ENCODE measurements at regions of chr17 and their contacts with region 1.

Region 1: DNA sequence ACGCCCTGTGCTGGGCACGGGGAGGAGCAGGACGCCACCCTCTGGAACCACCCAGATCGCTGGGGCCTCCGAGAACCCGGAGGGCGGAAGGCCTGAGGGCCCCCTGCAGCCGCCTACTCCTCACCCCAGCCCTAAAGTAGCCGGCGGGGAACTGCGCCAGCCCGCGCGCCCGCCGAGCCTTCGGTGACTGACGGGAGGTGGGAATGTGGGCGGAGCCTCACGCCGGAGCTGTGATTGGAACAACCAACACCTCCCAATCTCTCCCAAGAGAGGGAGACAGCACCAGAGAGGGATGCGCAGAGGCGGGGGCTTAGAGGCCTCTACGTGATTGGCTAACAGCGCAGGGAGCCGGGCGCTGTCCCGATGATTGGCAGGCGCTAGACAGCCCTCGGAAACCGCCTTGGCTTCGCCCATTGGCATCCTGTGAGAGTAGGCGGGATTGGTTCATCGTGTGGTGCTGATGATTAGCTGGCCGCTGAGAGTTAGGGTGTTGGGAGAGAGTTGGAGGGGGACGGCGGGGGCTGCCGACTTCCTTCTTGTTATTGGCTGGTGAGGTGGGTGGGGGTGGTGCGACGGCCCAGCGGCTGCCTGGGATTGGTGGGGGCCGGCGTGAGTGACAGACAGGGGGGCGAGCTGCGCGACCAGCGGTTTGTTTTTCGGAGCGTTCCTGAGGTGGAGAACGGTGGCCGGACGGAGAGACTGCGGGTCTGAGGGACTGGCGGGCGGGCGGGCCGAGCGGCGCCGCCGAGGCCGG is at the start of gene MAP3K3:
- DNase-seq: peak; percentile 99
- H3K4me3 ChIP-seq: peak within 1 kb of the TSS; percentile 64
- H3K27ac ChIP-seq: no peak within 1 kb of the TSS
- H3K4me1 ChIP-seq: peaks cover 12% of the 10 kb centered on the region; the same call in 1 of the 2 replicates
- H3K27me3 ChIP-seq: no peaks in the 10 kb centered on the region
- CTCF ChIP-seq: no peak; the same call in 1 of the 2 replicates
- total RNA-seq, gene MAP3K3: 12.9 and 14.1 TPM in 2 replicates

Region 2: DNA sequence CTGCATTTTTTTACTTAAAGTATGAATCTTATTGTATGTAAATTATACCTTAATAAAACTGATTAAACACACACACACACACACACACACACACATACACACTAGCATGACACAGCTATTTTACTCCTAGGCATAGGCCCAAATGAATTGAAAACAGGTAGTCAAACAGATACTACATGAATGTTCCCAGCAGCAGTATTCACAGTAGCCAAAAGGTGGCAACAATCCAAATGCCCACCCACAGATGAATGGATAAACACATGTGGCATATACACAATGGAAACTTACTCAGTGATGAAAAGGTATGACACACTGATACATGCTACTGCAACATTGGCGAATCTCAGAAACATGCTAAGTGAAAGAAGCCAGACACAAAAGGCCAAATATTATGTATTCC is 399.3 kb before region 1 on chr17:
- CTCF ChIA-PET with region 1: no interaction called
- POLR2A ChIA-PET with region 1: no interaction called
- intact Hi-C with region 1: no loop called
- DNase-seq: no peak
- H3K4me3 ChIP-seq: no peak overlapping the region
- H3K27ac ChIP-seq: no peak overlapping the region
- H3K4me1 ChIP-seq: no peaks in the 10 kb centered on the region
- H3K27me3 ChIP-seq: no peaks in the 10 kb centered on the region
- CTCF ChIP-seq: no peak

Region 3: GRCh38 chr17:63464691-63465236 is 157.2 kb before region 1 on chr17:
- CTCF ChIA-PET with region 1: no interaction called
- POLR2A ChIA-PET with region 1: interaction called, 10 read pairs
- intact Hi-C with region 1: no loop called
- DNase-seq: no peak
- H3K4me3 ChIP-seq: no peak overlapping the region
- H3K27ac ChIP-seq: no peak overlapping the region
- H3K4me1 ChIP-seq: peaks cover 29% of the 10 kb centered on the region
- H3K27me3 ChIP-seq: peaks cover 6% of the 10 kb centered on the region; the same call in 1 of the 2 replicates
- CTCF ChIP-seq: no peak

Region 4: GRCh38 chr17:63675607-63676413 is 53.9 kb after region 1 on chr17:
- CTCF ChIA-PET with region 1: no interaction called
- POLR2A ChIA-PET with region 1: no interaction called
- intact Hi-C with region 1: loop called (anchors 5 kb)
- DNase-seq: peak; percentile 80 to 85
- H3K4me3 ChIP-seq: peak overlapping the region; percentile 10; the same call in 1 of the 2 replicates
- H3K27ac ChIP-seq: no peak overlapping the region
- H3K4me1 ChIP-seq: peaks cover 19% of the 10 kb centered on the region
- H3K27me3 ChIP-seq: no peaks in the 10 kb centered on the region
- CTCF ChIP-seq: no peak

Region 5: DNA sequence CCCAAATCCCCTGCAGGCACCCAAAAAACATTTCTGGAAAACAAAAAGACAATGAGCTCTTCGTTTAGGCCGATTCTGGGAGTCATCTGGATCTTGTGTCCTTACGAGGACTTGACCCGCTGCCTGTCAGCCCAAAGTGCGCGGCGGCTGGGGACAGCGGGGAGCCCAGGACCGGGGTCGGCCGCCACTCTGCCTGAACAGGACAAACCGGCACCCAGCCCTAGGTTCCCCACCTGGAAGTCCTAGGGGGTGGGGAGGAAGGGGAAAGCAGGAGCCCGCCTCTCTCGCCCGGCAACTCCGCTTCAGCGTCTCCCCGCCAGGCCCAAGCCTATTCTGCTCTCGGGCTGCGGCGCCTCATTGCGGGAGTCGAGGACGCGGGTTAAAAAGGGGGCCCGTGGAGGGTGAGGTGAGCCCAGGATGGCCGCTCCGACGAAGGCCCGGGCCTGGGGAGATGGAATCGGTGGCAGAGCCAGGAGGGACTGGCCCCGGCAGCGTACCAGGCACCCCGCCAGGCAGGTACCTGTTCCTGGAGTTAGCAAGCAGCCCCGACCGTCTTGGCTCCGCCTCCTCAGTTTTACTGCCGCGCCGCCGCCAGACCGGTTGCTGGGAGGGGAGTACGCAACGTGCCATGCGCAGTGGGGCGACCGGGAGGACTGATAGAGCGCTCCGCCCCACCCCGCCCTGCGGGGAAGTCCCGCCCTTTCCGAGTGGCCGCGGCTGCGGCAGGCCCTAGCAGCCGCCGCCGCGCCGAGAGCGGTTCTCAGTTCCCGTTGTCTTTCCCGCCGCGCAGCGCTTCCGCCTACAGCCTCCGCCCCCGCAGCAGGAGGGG is 119.5 kb after region 1 on chr17 and contains the start of gene STRADA:
- CTCF ChIA-PET with region 1: no interaction called
- POLR2A ChIA-PET with region 1: interaction called, 3 read pairs
- intact Hi-C with region 1: loop called (anchors 2 kb)
- DNase-seq: peak; percentile 97 to 99
- H3K4me3 ChIP-seq: peak within 1 kb of the TSS; percentile 91
- H3K27ac ChIP-seq: peak within 1 kb of the TSS; percentile 72
- H3K4me1 ChIP-seq: peaks cover 15% of the 10 kb centered on the region
- H3K27me3 ChIP-seq: no peaks in the 10 kb centered on the region
- CTCF ChIP-seq: no peak
- total RNA-seq, gene STRADA: 28.8 and 30.6 TPM in 2 replicates

Region 6: GRCh38 chr17:63842540-63843386 is 220.8 kb after region 1 on chr17 and contains the start of gene SMARCD2:
- CTCF ChIA-PET with region 1: no interaction called
- POLR2A ChIA-PET with region 1: no interaction called
- intact Hi-C with region 1: loop called (anchors 5 kb)
- DNase-seq: peak; percentile 92 to 97
- H3K4me3 ChIP-seq: peak within 1 kb of the TSS; percentile 86
- H3K27ac ChIP-seq: peak within 1 kb of the TSS; percentile 47; the same call in 1 of the 2 replicates
- H3K4me1 ChIP-seq: peaks cover 43% of the 10 kb centered on the region
- H3K27me3 ChIP-seq: no peaks in the 10 kb centered on the region
- CTCF ChIP-seq: no peak
- total RNA-seq, gene SMARCD2: 73.6 and 98.7 TPM in 2 replicates